ENCODE measurements at regions of chr10 and their contacts with region 1.

Region 1: DNA sequence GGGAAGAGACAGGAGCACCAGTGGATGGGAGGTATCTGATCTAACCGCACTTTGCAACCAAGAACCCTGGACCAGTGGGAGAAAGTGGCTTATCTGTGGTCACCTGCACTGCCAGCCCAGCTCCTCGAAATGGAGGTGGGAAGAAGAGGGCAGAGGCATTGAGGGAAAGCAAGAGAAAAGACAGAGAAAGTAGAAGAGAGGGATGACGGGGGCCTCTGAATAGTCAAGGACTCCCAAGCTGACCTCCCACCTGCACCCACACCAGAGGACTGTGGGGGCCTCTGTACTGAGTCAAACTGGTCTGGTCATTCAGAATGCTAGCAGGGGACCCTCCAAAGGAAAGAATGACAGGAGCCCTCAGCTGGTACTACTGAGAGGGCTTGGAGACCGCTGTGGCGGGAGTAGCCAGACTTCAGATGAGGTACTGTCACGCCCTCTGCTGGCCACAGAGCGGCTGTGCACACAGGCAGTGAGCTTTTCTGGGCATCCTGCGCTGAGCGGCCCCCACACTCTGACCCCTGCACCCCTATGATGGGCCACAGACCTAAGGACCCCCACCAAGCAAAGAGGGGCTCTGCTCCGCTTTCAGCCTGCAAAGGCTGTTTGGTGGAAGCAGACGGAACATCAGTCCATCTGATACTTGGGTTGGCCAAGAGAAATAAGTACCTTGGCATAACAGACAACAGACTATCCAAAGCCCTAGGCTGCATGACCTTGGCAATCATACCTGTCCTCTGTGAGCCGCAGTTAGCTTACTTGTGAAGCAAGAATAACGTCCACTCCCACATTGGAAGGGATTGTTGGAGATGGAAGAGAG is 112.9 kb downstream of the COL13A1 start:
- DNase-seq: peak; percentile 87
- H3K4me3 ChIP-seq: no peak overlapping the region; a peak in 1 of 4 replicates
- H3K27ac ChIP-seq: no peak overlapping the region
- H3K4me1 ChIP-seq: peaks cover 0 to 5% of the 10 kb centered on the region in 2 experiments; a peak in 1 of 4 replicates
- H3K27me3 ChIP-seq: no peaks in the 10 kb centered on the region
- CTCF ChIP-seq: peak; percentile 90
- EP300 ChIP-seq: no peak
- RAD21 ChIP-seq: peak; percentile 94

Region 2: GRCh38 chr10:69629897-69630650 is 284.5 kb before region 1 on chr10 and contains the start of gene FAM241B:
- CTCF ChIA-PET with region 1: interaction called, 12 read pairs
- POLR2A ChIA-PET with region 1: no interaction called
- DNase-seq: peak; percentile 97
- H3K4me3 ChIP-seq: peak within 1 kb of the TSS; percentile 76 to 82
- H3K27ac ChIP-seq: peak within 1 kb of the TSS in 1 of 2 experiments; percentile 6; a peak in 1 of 4 replicates
- H3K4me1 ChIP-seq: peaks cover 6 to 17% of the 10 kb centered on the region in 2 experiments; a peak in 2 of 4 replicates
- H3K27me3 ChIP-seq: no peaks in the 10 kb centered on the region; the same call in 1 of the 2 replicates
- CTCF ChIP-seq: peak; percentile 95
- EP300 ChIP-seq: no peak
- RAD21 ChIP-seq: peak; percentile 43
- polyA plus RNA-seq, gene FAM241B: 16.0 and 19.2 TPM in 2 replicates

Region 3: GRCh38 chr10:69728335-69728870 is 186.2 kb before region 1 on chr10:
- CTCF ChIA-PET with region 1: interaction called, 17 read pairs
- POLR2A ChIA-PET with region 1: no interaction called
- DNase-seq: peak; percentile 66
- H3K4me3 ChIP-seq: no peak overlapping the region
- H3K27ac ChIP-seq: peak overlapping the region; percentile 39 to 51; a peak in 3 of 4 replicates
- H3K4me1 ChIP-seq: peaks cover 12 to 39% of the 10 kb centered on the region in 2 experiments; a peak in 3 of 4 replicates
- H3K27me3 ChIP-seq: no peaks in the 10 kb centered on the region
- CTCF ChIP-seq: no peak
- EP300 ChIP-seq: no peak
- RAD21 ChIP-seq: no peak

Region 4: GRCh38 chr10:69786791-69787190 is 127.8 kb before region 1 on chr10:
- CTCF ChIA-PET with region 1: interaction called, 52 read pairs
- POLR2A ChIA-PET with region 1: no interaction called
- DNase-seq: no peak
- H3K4me3 ChIP-seq: no peak overlapping the region
- H3K27ac ChIP-seq: no peak overlapping the region
- H3K4me1 ChIP-seq: no peaks in the 10 kb centered on the region
- H3K27me3 ChIP-seq: peaks cover 27% of the 10 kb centered on the region; the same call in 1 of the 2 replicates
- CTCF ChIP-seq: peak; percentile 58
- EP300 ChIP-seq: no peak
- RAD21 ChIP-seq: peak; percentile 63

Region 5: GRCh38 chr10:69866688-69867461 is 47.7 kb before region 1 on chr10:
- CTCF ChIA-PET with region 1: interaction called, 42 read pairs
- POLR2A ChIA-PET with region 1: no interaction called
- DNase-seq: peak; percentile 81
- H3K4me3 ChIP-seq: peak overlapping the region; percentile 2 to 24; a peak in 2 of 4 replicates
- H3K27ac ChIP-seq: peak overlapping the region; percentile 87 to 93
- H3K4me1 ChIP-seq: peaks cover 37 to 50% of the 10 kb centered on the region in 2 experiments
- H3K27me3 ChIP-seq: no peaks in the 10 kb centered on the region
- CTCF ChIP-seq: 0 out of 2 replicates have a peak, but pooled peaks have one; percentile 14
- EP300 ChIP-seq: peak in 1 of 2 experiments; percentile 22; a peak in 1 of 4 replicates
- RAD21 ChIP-seq: 0 out of 2 replicates have a peak, but pooled peaks have one; percentile 8

Region 6: GRCh38 chr10:69901628-69902505 is 12.7 kb before region 1 on chr10:
- CTCF ChIA-PET with region 1: interaction called, 120 read pairs
- POLR2A ChIA-PET with region 1: interaction called, 3 read pairs
- DNase-seq: peak; percentile 92
- H3K4me3 ChIP-seq: no peak overlapping the region
- H3K27ac ChIP-seq: no peak overlapping the region
- H3K4me1 ChIP-seq: peaks cover 0 to 9% of the 10 kb centered on the region in 2 experiments; a peak in 1 of 4 replicates
- H3K27me3 ChIP-seq: no peaks in the 10 kb centered on the region
- CTCF ChIP-seq: peak; percentile 69
- EP300 ChIP-seq: no peak
- RAD21 ChIP-seq: peak; percentile 68

Region 7: GRCh38 chr10:69957886-69958555 is 43.4 kb after region 1 on chr10:
- CTCF ChIA-PET with region 1: interaction called, 26 read pairs
- POLR2A ChIA-PET with region 1: no interaction called
- DNase-seq: peak; percentile 73
- H3K4me3 ChIP-seq: no peak overlapping the region
- H3K27ac ChIP-seq: no peak overlapping the region
- H3K4me1 ChIP-seq: peaks cover 0 to 5% of the 10 kb centered on the region in 2 experiments; a peak in 1 of 4 replicates
- H3K27me3 ChIP-seq: no peaks in the 10 kb centered on the region
- CTCF ChIP-seq: peak; percentile 81
- EP300 ChIP-seq: no peak
- RAD21 ChIP-seq: peak; percentile 69